ENCODE measurements at regions of chr9 and their contacts with region 1.

Region 1: GRCh38 chr9:136631038-136632000 is 31.4 kb upstream of the EGFL7 start:
- DNase-seq: peak; percentile 67 to 87 (median 78)
- ATAC-seq: peak; percentile 98
- H3K4me3 ChIP-seq: no peak overlapping the region
- H3K4me3 Mint-ChIP-seq: no peak overlapping the region
- H3K27ac ChIP-seq: no peak overlapping the region
- H3K27ac Mint-ChIP-seq: no peak overlapping the region
- H3K4me1 ChIP-seq: peaks cover 0 to 9% of the 10 kb centered on the region in 2 donors
- H3K4me1 Mint-ChIP-seq: peaks cover 0 to 4% (median 0%) of the 10 kb centered on the region in 7 donors
- H3K27me3 ChIP-seq: no peaks in the 10 kb centered on the region
- H3K27me3 Mint-ChIP-seq: peaks cover 0 to 5% (median 0%) of the 10 kb centered on the region in 5 donors

Region 2: DNA sequence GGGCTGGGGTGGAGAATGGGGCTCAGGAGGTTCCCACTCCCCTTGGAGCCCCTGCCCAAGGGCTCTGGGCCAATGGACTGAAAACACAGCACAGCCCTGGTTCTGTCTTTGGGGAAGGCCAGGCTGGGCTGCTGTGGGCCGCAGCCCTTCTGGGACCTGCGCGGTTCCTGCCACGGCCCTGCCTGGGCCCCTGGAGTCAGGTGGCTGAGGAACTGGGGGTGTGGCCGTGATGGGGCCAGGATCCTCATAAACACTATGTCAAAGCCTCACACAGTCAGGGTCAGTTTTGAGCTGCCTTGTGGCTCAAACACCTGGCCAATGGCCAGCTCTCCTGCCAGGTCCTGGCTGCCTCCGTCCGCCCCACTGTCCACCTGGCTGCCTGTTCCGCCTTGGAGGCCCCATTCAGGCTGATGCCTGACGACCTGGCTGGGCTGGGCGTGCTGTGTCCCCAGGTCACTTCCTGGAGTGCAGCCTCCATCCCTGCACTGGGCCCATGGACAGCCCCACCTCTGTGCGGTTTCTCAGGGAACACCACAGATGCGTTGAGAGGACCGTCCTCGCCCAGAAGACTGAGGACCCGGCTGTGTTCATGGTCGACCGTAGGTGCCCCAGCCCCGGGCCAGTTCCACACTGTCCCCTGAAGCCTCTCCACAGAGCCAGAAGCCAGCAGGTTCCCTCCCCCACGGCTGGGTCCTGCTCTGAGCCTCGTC is 1042.3 kb before region 1 on chr9:
- CTCF ChIA-PET with region 1: no interaction called
- POLR2A ChIA-PET with region 1: no interaction called
- intact Hi-C with region 1: no loop called
- DNase-seq: no peak
- ATAC-seq: no peak
- H3K4me3 ChIP-seq: no peak overlapping the region
- H3K4me3 Mint-ChIP-seq: no peak overlapping the region
- H3K27ac ChIP-seq: no peak overlapping the region
- H3K27ac Mint-ChIP-seq: no peak overlapping the region
- H3K4me1 ChIP-seq: no peaks in the 10 kb centered on the region
- H3K4me1 Mint-ChIP-seq: no peaks in the 10 kb centered on the region
- H3K27me3 ChIP-seq: no peaks in the 10 kb centered on the region
- H3K27me3 Mint-ChIP-seq: peaks cover 0 to 26% (median 15%) of the 10 kb centered on the region in 5 donors

Region 3: DNA sequence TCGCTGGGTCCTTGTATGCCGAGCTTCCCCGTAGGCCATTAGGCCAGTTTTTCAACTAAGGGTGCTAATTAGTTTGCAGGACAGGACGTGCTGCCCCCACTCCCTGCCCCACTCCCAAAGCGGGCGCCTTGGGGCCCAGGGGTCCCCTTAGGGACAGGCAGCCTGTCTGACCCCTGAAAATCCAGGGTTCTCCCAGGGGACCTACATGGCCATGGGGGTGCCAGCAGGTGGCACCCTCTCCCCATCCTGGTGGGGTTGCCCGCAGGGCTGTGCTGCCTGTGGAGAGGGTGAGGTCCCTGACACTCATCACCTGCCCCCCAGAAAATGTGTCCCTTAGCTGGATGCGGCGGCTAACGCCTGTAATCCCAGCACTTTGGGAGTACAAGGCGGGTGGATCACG is 318.9 kb before region 1 on chr9:
- CTCF ChIA-PET with region 1: no interaction called
- POLR2A ChIA-PET with region 1: no interaction called
- intact Hi-C with region 1: loop called in 1 of 2 experiments (anchors 5 kb)
- DNase-seq: peak in 7 of 9 donors; percentile 29 to 54 (median 37)
- ATAC-seq: peak; percentile 51
- H3K4me3 ChIP-seq: no peak overlapping the region
- H3K4me3 Mint-ChIP-seq: no peak overlapping the region
- H3K27ac ChIP-seq: no peak overlapping the region
- H3K27ac Mint-ChIP-seq: no peak overlapping the region
- H3K4me1 ChIP-seq: peaks cover 0 to 8% of the 10 kb centered on the region in 2 donors
- H3K4me1 Mint-ChIP-seq: no peaks in the 10 kb centered on the region
- H3K27me3 ChIP-seq: no peaks in the 10 kb centered on the region
- H3K27me3 Mint-ChIP-seq: no peaks in the 10 kb centered on the region

Region 4: GRCh38 chr9:136488247-136489214 is 142.8 kb before region 1 on chr9:
- CTCF ChIA-PET with region 1: interaction called, 75 read pairs
- POLR2A ChIA-PET with region 1: interaction called, 6 read pairs
- intact Hi-C with region 1: loop called in 1 of 2 experiments (anchors 1 kb)
- DNase-seq: peak; percentile 54 to 85 (median 73)
- ATAC-seq: peak; percentile 59
- H3K4me3 ChIP-seq: no peak overlapping the region
- H3K4me3 Mint-ChIP-seq: peak overlapping the region in 1 of 10 donors; percentile 47
- H3K27ac ChIP-seq: no peak overlapping the region
- H3K27ac Mint-ChIP-seq: no peak overlapping the region
- H3K4me1 ChIP-seq: peaks cover 3 to 10% of the 10 kb centered on the region in 2 donors
- H3K4me1 Mint-ChIP-seq: peaks cover 3 to 8% (median 5%) of the 10 kb centered on the region in 7 donors
- H3K27me3 ChIP-seq: no peaks in the 10 kb centered on the region
- H3K27me3 Mint-ChIP-seq: no peaks in the 10 kb centered on the region

Region 5: GRCh38 chr9:136539427-136540421 is 91.6 kb before region 1 on chr9:
- CTCF ChIA-PET with region 1: no interaction called
- POLR2A ChIA-PET with region 1: interaction called, 5 read pairs
- intact Hi-C with region 1: loop called in 1 of 2 experiments (anchors 2 kb)
- DNase-seq: peak; percentile 50 to 92 (median 80)
- ATAC-seq: peak; percentile 79
- H3K4me3 ChIP-seq: peak overlapping the region; percentile 65
- H3K4me3 Mint-ChIP-seq: peak overlapping the region; percentile 78 to 97 (median 85)
- H3K27ac ChIP-seq: peak overlapping the region; percentile 80
- H3K27ac Mint-ChIP-seq: peak overlapping the region; percentile 90 to 99 (median 99)
- H3K4me1 ChIP-seq: peaks cover 61 to 70% of the 10 kb centered on the region in 2 donors
- H3K4me1 Mint-ChIP-seq: peaks cover 24 to 73% (median 48%) of the 10 kb centered on the region in 7 donors
- H3K27me3 ChIP-seq: no peaks in the 10 kb centered on the region
- H3K27me3 Mint-ChIP-seq: no peaks in the 10 kb centered on the region

Region 6: GRCh38 chr9:136644598-136645351 is 13.5 kb after region 1 on chr9:
- CTCF ChIA-PET with region 1: interaction called, 3 read pairs
- POLR2A ChIA-PET with region 1: no interaction called
- intact Hi-C with region 1: loop called in 1 of 2 experiments (anchors 2 kb)
- DNase-seq: peak in 7 of 9 donors; percentile 59 to 78 (median 67)
- ATAC-seq: peak; percentile 92
- H3K4me3 ChIP-seq: no peak overlapping the region
- H3K4me3 Mint-ChIP-seq: no peak overlapping the region
- H3K27ac ChIP-seq: no peak overlapping the region
- H3K27ac Mint-ChIP-seq: no peak overlapping the region
- H3K4me1 ChIP-seq: peaks cover 10% of the 10 kb centered on the region in 2 donors
- H3K4me1 Mint-ChIP-seq: peaks cover 0 to 3% (median 0%) of the 10 kb centered on the region in 7 donors
- H3K27me3 ChIP-seq: peaks cover 0 to 13% of the 10 kb centered on the region in 2 donors
- H3K27me3 Mint-ChIP-seq: peaks cover 12 to 30% (median 28%) of the 10 kb centered on the region in 5 donors

Measured in naive thymus-derived CD4-positive, alpha-beta T cell (primary cell).